B cell (primary cell): ENCODE measurements at regions of chr2 and their contacts with region 1.

Region 1: DNA sequence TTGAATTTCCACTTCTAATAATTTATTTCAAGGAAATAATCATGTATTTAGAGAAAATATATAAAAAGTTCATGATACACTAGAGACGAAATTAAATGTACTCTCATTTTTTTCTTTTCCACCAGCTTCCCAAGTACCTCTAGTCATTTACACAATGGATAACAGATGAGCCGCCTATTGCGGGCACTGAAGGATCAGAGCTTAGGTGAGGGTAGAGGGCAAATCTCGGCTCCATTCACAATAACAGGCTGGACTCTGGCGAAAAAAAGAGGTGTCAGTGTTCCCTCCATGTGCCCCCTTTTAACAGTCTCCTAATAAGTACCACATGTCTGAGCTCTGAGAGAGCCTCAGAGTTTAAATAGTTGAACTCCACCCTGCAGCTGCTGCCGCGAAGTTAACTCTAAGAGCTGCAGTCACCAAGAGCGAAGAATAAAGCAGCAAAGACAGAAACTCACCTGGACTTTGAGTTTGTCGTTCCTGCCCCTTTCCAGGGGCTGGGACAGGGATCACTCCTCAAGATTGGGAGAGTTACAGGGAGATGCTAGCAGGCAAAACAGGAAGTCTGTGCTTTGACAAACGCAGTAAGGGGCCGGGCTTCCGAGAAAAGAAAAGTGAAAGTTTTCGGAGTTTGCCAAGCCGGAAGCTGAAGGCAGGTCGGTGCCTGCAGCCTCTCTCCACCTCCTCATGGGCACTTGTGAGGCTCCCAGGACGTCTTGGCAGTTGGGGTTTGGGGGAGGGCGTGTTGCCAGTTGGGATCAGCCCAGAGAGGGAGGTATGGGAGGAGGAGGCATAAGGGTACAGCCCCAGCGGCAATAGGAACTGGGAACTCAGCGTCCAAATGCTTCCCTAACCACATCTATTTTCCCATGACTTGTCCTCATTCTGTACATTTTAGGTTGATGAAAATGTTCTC is at the start of gene SP110:
- DNase-seq: peak; percentile 87
- ATAC-seq: peak; percentile 76
- H3K4me3 ChIP-seq: peak within 1 kb of the TSS; percentile 66 to 100 (median 89)
- H3K4me3 Mint-ChIP-seq: peak within 1 kb of the TSS; percentile 99
- H3K27ac ChIP-seq: peak within 1 kb of the TSS; percentile 71 to 80
- H3K27ac Mint-ChIP-seq: peak within 1 kb of the TSS; percentile 96
- H3K4me1 ChIP-seq: peaks cover 72 to 83% of the 10 kb centered on the region in 2 donors
- H3K4me1 Mint-ChIP-seq: peaks cover 78% of the 10 kb centered on the region
- H3K27me3 ChIP-seq: no peaks in the 10 kb centered on the region
- H3K27me3 Mint-ChIP-seq: no peaks in the 10 kb centered on the region
- CTCF ChIP-seq: no peak
- total RNA-seq, gene SP110: 261 and 280 TPM in 2 replicates

Region 2: GRCh38 chr2:230209422-230210051 is 10.1 kb before region 1 on chr2:
- CTCF ChIA-PET with region 1: interaction called, 44 read pairs
- POLR2A ChIA-PET with region 1: interaction called, 8 read pairs
- intact Hi-C with region 1: loop called (anchors 1 kb)
- DNase-seq: peak; percentile 80
- ATAC-seq: peak; percentile 69
- H3K4me3 ChIP-seq: peak overlapping the region in 2 of 5 experiments; percentile 6 to 35
- H3K4me3 Mint-ChIP-seq: no peak overlapping the region
- H3K27ac ChIP-seq: peak overlapping the region; percentile 14 to 52
- H3K27ac Mint-ChIP-seq: no peak overlapping the region
- H3K4me1 ChIP-seq: peaks cover 67 to 71% of the 10 kb centered on the region in 2 donors
- H3K4me1 Mint-ChIP-seq: peaks cover 42% of the 10 kb centered on the region
- H3K27me3 ChIP-seq: no peaks in the 10 kb centered on the region
- H3K27me3 Mint-ChIP-seq: no peaks in the 10 kb centered on the region
- CTCF ChIP-seq: no peak

Region 3: DNA sequence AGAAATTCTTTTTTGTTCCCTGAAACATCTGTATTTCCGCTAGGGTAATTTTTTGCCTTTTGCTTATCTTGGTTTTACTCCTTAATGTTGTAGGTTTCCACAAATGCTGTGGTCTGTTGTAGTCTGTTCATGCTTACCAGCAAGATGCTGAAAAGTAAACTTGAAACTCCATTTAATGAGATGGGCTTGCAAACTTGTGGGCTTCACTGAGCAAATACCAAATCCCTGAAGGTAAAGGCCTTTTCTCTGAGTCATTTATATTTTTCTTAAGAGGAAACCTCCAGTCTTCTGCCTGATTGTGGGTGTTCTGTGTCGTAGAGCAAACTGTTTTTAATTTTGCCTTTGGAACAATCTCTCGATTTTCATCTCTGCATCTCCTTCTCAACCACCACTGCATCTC is 15.2 kb after region 1 on chr2:
- CTCF ChIA-PET with region 1: no interaction called
- POLR2A ChIA-PET with region 1: interaction called, 3 read pairs
- intact Hi-C with region 1: loop called (anchors 2 kb)
- DNase-seq: no peak
- ATAC-seq: no peak
- H3K4me3 ChIP-seq: no peak overlapping the region
- H3K4me3 Mint-ChIP-seq: peak overlapping the region; percentile 30
- H3K27ac ChIP-seq: peak overlapping the region in 1 of 2 donors; percentile 35
- H3K27ac Mint-ChIP-seq: peak overlapping the region; percentile 85
- H3K4me1 ChIP-seq: peaks cover 35 to 45% of the 10 kb centered on the region in 2 donors
- H3K4me1 Mint-ChIP-seq: peaks cover 63% of the 10 kb centered on the region
- H3K27me3 ChIP-seq: no peaks in the 10 kb centered on the region
- H3K27me3 Mint-ChIP-seq: no peaks in the 10 kb centered on the region
- CTCF ChIP-seq: no peak

Region 4: DNA sequence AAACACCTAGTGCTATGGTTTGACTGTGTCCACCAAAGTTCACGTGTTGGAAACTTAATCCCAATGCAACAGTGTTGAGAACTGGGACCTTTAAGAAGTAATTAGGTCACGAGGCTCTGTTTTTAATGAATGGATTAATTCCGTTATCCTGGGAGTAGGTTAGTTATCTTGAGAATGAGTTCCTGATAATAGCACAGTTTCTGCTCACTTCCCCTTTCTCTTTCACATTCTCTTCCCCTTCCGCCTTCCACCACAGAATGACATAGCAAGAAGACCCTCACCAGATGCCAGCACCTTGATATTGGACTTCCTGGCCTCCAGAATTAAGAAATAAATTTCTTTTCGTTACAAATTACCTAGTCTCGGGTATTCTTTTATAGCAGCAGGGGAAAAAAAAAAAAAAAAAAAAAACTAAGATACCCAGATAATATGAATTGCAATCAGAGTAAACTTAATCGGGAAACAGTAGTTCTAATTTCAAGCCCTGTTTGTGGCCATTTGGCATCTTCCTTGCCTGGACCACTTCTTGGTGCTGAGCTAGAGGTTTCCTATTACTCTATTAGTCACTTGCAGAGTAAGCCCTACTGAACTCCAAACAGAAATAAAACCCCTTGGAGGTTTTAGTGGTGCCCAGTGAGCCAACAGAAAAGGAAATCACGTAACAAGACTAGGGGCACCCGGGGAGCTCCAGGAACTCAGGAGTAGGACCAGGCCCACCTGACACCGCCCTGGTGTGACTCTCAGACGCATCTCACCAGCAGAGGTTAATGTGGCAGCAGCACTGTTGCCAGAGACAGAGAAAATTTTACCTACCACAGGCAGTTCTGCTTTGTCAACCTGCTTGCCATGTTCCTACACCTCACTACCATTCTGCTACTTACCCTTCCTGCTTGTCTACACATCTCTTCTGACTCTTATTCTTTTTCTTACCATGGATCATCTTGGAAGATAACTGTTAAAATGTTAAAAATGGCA is 345.4 kb after region 1 on chr2:
- CTCF ChIA-PET with region 1: no interaction called
- POLR2A ChIA-PET with region 1: no interaction called
- intact Hi-C with region 1: no loop called
- DNase-seq: peak; percentile 81
- ATAC-seq: peak; percentile 86
- H3K4me3 ChIP-seq: peak overlapping the region in 3 of 5 experiments; percentile 19 to 48 (median 34)
- H3K4me3 Mint-ChIP-seq: peak overlapping the region; percentile 52
- H3K27ac ChIP-seq: peak overlapping the region; percentile 63 to 65
- H3K27ac Mint-ChIP-seq: peak overlapping the region; percentile 57
- H3K4me1 ChIP-seq: peaks cover 14 to 23% of the 10 kb centered on the region in 2 donors
- H3K4me1 Mint-ChIP-seq: peaks cover 25% of the 10 kb centered on the region
- H3K27me3 ChIP-seq: no peaks in the 10 kb centered on the region
- H3K27me3 Mint-ChIP-seq: no peaks in the 10 kb centered on the region
- CTCF ChIP-seq: no peak